Posterior vena cava (tissue), 2 donors: ENCODE measurements at regions of chr1 and their contacts with region 1.

Region 1: GRCh38 chr1:167721617-167722151 is at the start of gene MPZL1:
- DNase-seq: peak; percentile 99
- total RNA-seq, gene MPZL1: 120 to 146 TPM

Region 2: DNA sequence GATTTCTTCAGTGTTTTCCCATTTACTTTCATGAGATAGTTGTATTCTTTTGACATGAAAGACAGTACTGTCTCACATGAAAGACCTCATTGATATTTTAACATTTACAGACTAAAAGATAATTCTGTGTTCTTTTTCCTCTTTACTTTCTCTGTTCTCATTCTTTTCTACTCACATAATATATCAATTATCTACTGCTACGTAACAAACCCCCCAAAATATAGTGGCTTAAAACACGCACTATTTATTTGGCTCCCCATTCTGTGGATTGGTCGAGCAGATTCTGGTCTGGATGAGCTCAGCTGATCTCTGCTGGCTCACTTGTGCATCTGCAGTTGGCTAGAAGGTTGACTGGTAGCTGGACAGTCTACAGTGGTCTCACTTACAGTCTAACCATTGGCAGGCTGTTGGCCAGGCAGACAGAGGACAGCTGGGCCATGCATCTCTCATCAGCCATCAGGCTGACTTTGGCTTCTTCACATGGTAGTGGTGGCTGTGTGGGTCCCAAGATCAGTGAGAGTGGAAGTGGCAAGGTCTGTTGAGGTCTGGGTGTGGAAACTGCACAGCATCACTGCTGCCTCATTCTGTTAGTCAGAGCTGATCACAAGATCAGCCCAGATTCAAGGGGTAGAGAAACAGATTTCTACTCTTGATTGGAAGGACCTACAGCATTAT is 63.3 kb after region 1 on chr1:
- intact Hi-C with region 1: no loop called
- DNase-seq: no peak

Region 3: DNA sequence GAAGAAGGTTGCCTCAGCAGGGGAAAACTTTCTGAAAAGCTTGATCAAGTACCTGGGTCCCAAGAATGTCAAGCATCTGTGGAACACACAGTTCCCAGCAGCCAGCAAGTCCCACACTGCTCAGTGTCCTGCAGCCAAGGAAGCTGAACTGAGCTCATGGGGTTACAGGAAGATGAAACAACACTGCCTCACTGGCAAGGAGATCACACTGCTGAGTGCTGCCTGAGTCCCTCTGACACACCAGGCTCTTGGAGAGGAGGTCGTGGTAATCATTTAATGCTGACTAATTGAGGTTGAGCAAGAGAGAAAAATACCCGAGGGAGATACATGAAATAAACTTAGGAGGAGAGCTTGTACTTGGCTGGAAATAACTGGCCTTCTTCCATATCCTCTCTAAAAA is 75.3 kb after region 1 on chr1:
- intact Hi-C with region 1: loop called (anchors 5 kb)
- DNase-seq: peak; percentile 90